CD4-positive, alpha-beta memory T cell (primary cell): ENCODE measurements at regions of chr5 and their contacts with region 1.

Region 1: DNA sequence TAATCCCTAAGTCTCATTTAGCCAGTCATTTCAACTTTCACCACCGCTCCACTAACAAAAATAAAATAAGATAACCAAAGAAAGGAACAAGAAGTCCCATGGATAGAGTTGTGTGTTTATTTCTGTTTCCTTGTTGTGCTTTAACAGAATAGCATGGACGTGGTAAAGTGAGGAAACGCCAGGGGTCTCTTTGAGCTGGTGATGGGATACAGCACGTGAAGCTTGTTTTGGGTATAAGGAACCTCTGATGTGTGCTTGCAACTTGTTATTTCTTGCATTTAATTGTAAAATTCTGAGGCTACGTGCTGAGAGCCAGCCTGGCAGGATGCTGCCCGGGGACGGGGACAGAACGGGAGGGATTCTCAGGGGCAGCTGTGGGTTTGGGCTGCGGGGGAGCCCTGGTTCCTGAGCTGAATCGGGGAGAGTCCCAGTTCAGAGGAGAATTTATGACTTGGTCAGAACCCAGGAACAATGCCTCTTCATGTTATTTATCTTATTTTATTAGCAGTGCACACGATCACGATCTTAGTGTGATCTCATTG is 63.4 kb downstream of the ANKRD33B start:
- DNase-seq: no peak
- H3K4me3 ChIP-seq: peak overlapping the region; percentile 44 to 46
- H3K4me3 Mint-ChIP-seq: peak overlapping the region; percentile 83 to 95 (median 87)
- H3K27ac ChIP-seq: peak overlapping the region; percentile 40
- H3K27ac Mint-ChIP-seq: peak overlapping the region; percentile 62 to 95 (median 80)
- H3K4me1 ChIP-seq: peaks cover 18% of the 10 kb centered on the region
- H3K4me1 Mint-ChIP-seq: peaks cover 17 to 41% (median 23%) of the 10 kb centered on the region in 4 donors
- H3K27me3 ChIP-seq: no peaks in the 10 kb centered on the region
- H3K27me3 Mint-ChIP-seq: peaks cover 0 to 4% of the 10 kb centered on the region in 2 donors

Region 2: DNA sequence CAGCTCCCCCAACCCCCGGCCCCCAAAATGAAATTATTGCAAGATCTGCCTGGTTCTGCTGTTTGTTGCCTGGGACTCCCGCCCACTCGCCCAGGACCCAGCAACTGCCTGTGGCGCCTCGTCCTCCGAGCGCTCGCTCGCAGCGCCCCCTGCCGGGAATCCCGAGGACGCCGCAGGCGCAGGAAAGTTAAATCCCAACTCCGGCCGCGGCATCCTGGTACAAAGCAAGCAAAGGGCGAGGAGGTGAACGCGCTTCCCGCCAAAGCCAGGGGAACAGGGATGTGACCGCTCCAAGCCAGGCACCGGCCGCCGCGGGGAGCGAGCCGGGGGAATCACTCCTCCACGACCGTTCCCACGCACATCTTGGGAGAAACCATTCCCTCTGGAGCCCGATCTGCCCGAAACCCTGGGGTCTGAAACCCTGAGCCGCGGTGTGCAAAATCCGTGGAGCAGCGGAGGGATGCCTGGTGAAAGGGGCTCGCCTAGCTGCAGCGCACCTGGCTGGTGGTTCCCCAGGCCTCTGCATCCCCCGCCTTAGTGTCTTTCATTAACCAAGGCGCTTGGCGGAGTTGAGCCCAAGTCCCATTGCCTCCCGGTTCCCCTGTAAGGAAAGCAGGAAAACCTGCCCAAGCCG is 1082.6 kb before region 1 on chr5:
- CTCF ChIA-PET with region 1: no interaction called
- POLR2A ChIA-PET with region 1: no interaction called
- intact Hi-C with region 1: loop called (anchors 10 kb)
- DNase-seq: peak; percentile 13 to 48 (median 31)
- H3K4me3 ChIP-seq: peak overlapping the region in 1 of 2 donors; percentile 19
- H3K4me3 Mint-ChIP-seq: peak overlapping the region; percentile 72 to 88 (median 82)
- H3K27ac ChIP-seq: no peak overlapping the region
- H3K27ac Mint-ChIP-seq: peak overlapping the region in 3 of 7 donors; percentile 54 to 76 (median 55)
- H3K4me1 ChIP-seq: peaks cover 8% of the 10 kb centered on the region
- H3K4me1 Mint-ChIP-seq: peaks cover 4 to 17% (median 10%) of the 10 kb centered on the region in 4 donors
- H3K27me3 ChIP-seq: no peaks in the 10 kb centered on the region
- H3K27me3 Mint-ChIP-seq: peaks cover 9 to 10% of the 10 kb centered on the region in 2 donors

Region 3: GRCh38 chr5:10283927-10284635 is 343.1 kb before region 1 on chr5:
- CTCF ChIA-PET with region 1: interaction called, 144 read pairs
- POLR2A ChIA-PET with region 1: interaction called, 3 read pairs
- intact Hi-C with region 1: no loop called
- DNase-seq: peak; percentile 65 to 76 (median 66)
- H3K4me3 ChIP-seq: no peak overlapping the region
- H3K4me3 Mint-ChIP-seq: peak overlapping the region in 1 of 8 donors; percentile 45
- H3K27ac ChIP-seq: no peak overlapping the region
- H3K27ac Mint-ChIP-seq: no peak overlapping the region
- H3K4me1 ChIP-seq: peaks cover 8% of the 10 kb centered on the region
- H3K4me1 Mint-ChIP-seq: peaks cover 6 to 14% (median 9%) of the 10 kb centered on the region in 4 donors
- H3K27me3 ChIP-seq: no peaks in the 10 kb centered on the region
- H3K27me3 Mint-ChIP-seq: no peaks in the 10 kb centered on the region

Region 4: GRCh38 chr5:10441083-10441991 is 185.9 kb before region 1 on chr5 and contains the start of gene ROPN1L:
- CTCF ChIA-PET with region 1: interaction called, 19 read pairs
- POLR2A ChIA-PET with region 1: no interaction called
- intact Hi-C with region 1: no loop called
- DNase-seq: peak; percentile 75 to 83 (median 78)
- H3K4me3 ChIP-seq: peak within 1 kb of the TSS; percentile 71 to 89
- H3K4me3 Mint-ChIP-seq: peak within 1 kb of the TSS; percentile 86 to 90 (median 86)
- H3K27ac ChIP-seq: peak within 1 kb of the TSS; percentile 53
- H3K27ac Mint-ChIP-seq: peak within 1 kb of the TSS; percentile 22 to 85 (median 70)
- H3K4me1 ChIP-seq: peaks cover 45% of the 10 kb centered on the region
- H3K4me1 Mint-ChIP-seq: peaks cover 37 to 51% (median 38%) of the 10 kb centered on the region in 4 donors
- H3K27me3 ChIP-seq: no peaks in the 10 kb centered on the region
- H3K27me3 Mint-ChIP-seq: no peaks in the 10 kb centered on the region
- total RNA-seq, gene ROPN1L: 0.42 to 0.47 TPM

Region 5: DNA sequence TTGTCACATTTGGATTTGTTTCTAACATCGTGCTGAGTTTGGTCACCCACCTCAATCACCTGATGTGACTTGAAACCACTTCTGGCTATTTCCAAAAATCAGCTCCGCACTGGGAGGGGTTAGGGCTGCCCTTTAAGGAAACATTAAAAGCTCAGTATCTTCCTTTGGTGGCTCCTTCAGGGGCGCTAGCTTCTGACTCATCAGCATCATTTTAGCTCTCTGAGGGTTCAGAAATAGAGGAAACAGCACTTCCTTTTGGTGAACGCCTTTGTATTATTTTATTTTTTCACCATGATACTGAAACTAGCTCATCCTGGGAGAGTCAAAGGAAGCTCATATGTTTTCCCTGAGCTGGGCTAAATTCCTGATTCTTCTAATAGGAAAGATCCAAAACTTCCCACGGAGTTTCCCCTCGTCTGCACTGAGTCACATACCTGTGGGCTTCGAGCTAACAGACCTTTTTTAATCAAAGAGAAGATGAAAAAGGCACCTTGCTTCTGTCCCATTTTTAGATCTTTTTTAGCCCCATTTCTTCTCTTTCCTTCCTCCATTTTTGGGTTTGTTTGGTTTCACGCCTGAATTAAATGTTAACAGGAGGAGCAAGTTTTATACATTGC is 137.3 kb before region 1 on chr5:
- CTCF ChIA-PET with region 1: interaction called, 17 read pairs
- POLR2A ChIA-PET with region 1: no interaction called
- intact Hi-C with region 1: loop called (anchors 1 kb)
- DNase-seq: peak in 3 of 5 donors; percentile 2 to 14 (median 11)
- H3K4me3 ChIP-seq: no peak overlapping the region
- H3K4me3 Mint-ChIP-seq: peak overlapping the region in 7 of 8 donors; percentile 4 to 66 (median 54)
- H3K27ac ChIP-seq: peak overlapping the region; percentile 14
- H3K27ac Mint-ChIP-seq: peak overlapping the region; percentile 57 to 85 (median 77)
- H3K4me1 ChIP-seq: peaks cover 13% of the 10 kb centered on the region
- H3K4me1 Mint-ChIP-seq: peaks cover 7 to 32% (median 21%) of the 10 kb centered on the region in 4 donors
- H3K27me3 ChIP-seq: no peaks in the 10 kb centered on the region
- H3K27me3 Mint-ChIP-seq: no peaks in the 10 kb centered on the region

Region 6: GRCh38 chr5:10655161-10655971 is 28.1 kb after region 1 on chr5:
- CTCF ChIA-PET with region 1: no interaction called
- POLR2A ChIA-PET with region 1: no interaction called
- intact Hi-C with region 1: no loop called
- DNase-seq: no peak
- H3K4me3 ChIP-seq: no peak overlapping the region
- H3K4me3 Mint-ChIP-seq: no peak overlapping the region
- H3K27ac ChIP-seq: no peak overlapping the region
- H3K27ac Mint-ChIP-seq: no peak overlapping the region
- H3K4me1 ChIP-seq: no peaks in the 10 kb centered on the region
- H3K4me1 Mint-ChIP-seq: no peaks in the 10 kb centered on the region
- H3K27me3 ChIP-seq: no peaks in the 10 kb centered on the region
- H3K27me3 Mint-ChIP-seq: no peaks in the 10 kb centered on the region